Head of caudate nucleus (tissue), 42 donors: ENCODE measurements at regions of chr15 and their contacts with region 1.

Region 1: GRCh38 chr15:85168642-85169173 is 187.1 kb downstream of the PDE8A start:
- DNase-seq: peak in 26 of 42 donors; percentile 7 to 53 (median 27)

Region 2: GRCh38 chr15:84955089-84955848 is 213.4 kb before region 1 on chr15:
- intact Hi-C with region 1: loop called (anchors 10 kb)
- DNase-seq: peak; percentile 65 to 94 (median 86)

Region 3: DNA sequence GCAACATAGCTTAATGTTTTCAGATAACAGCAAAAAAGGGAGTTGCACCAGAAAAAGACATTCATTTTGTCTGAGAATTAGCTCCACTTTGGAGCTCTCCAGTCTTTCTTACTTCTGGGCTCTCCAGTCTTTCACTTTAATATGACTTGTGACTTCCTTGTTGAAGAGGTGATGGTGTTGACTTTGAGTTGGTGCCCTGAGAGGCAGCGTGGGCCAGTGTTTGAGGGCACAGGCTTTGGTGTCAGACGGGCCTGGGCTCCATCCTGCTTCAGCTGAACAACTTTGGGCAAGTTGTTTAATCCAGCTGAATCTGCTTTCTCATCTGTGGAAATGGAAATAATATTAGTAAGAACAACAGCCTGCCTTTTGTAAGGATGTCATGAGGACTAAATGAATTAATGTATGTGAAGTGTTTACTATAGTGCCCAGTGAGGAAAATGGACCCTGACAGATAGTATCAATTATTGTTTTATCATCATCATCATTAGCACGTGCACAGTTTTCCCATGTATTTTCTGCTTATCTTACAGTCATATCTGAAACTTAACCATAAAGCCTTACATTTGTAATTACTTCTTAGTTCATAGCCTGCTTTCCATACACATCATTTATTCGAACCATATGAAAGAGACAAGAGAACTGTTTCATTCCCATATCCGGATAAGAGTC is 78.6 kb before region 1 on chr15:
- intact Hi-C with region 1: no loop called
- DNase-seq: peak in 1 of 42 donors; percentile 24

Region 4: GRCh38 chr15:85100186-85100937 is 68.3 kb before region 1 on chr15:
- intact Hi-C with region 1: no loop called
- DNase-seq: peak in 1 of 42 donors; percentile 43